GM12878 (cell line): ENCODE measurements at regions of chr18 and their contacts with region 1.

Region 1: DNA sequence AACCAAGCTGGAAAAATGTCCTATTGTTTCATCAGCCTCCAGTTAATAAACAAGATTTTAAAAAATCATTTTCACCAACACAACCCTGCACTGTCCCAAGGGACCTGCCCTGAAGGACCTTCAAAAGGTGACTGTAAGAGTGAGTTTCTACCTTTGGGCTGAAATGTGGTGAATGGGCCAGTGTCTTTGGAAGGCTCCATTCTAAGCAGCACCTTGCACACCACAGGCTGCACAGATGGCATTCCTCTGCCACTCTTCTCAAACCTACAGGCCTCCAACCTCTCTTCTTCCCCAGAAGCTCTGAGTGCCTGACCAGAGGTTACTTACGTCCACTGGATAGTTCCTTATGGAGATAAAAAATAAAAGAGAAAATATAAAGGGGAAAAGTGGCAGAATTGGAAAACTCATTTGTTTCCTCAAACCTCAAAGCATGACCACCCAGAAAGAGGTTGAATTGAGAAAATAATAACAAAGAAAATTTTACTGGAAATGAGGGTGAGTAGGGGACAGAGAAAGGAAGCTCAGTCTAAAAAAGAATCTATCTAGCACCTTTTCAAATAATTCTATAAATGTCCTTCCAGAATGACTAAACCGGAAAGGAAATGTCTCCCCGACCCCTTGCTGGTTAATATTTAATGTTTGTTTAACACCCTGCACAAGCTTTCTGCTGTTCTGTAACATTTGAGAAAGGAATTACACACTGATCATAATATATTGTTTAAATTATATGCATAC is 175.7 kb downstream of the METTL4 start:
- DNase-seq: no peak
- ATAC-seq: peak; percentile 83
- H3K4me3 ChIP-seq: no peak overlapping the region
- H3K27ac ChIP-seq: no peak overlapping the region
- H3K4me1 ChIP-seq: no peaks in the 10 kb centered on the region
- H3K27me3 ChIP-seq: no peaks in the 10 kb centered on the region
- CTCF ChIP-seq: no peak
- EP300 ChIP-seq: peak; percentile 59 to 63; a peak in 2 of 4 replicates
- POLR2A ChIP-seq: no peak
- RAD21 ChIP-seq: no peak

Region 2: GRCh38 chr18:1846640-1847039 is 549.0 kb before region 1 on chr18:
- CTCF ChIA-PET with region 1: no interaction called
- POLR2A ChIA-PET with region 1: no interaction called
- RAD21 ChIA-PET with region 1: no interaction called
- SMC1A ChIA-PET with region 1: no interaction called
- in situ Hi-C with region 1: no loop called
- intact Hi-C with region 1: no loop called
- DNase-seq: no peak
- ATAC-seq: no peak
- H3K4me3 ChIP-seq: no peak overlapping the region
- H3K27ac ChIP-seq: no peak overlapping the region
- H3K4me1 ChIP-seq: no peaks in the 10 kb centered on the region
- H3K27me3 ChIP-seq: no peaks in the 10 kb centered on the region
- CTCF ChIP-seq: no peak
- EP300 ChIP-seq: no peak
- POLR2A ChIP-seq: no peak
- RAD21 ChIP-seq: no peak

Region 3: GRCh38 chr18:2312440-2312839 is 83.2 kb before region 1 on chr18:
- CTCF ChIA-PET with region 1: interaction called, 3 read pairs
- POLR2A ChIA-PET with region 1: interaction called, 10 read pairs
- RAD21 ChIA-PET with region 1: interaction called, 10 read pairs
- SMC1A ChIA-PET with region 1: interaction called, 10 read pairs
- in situ Hi-C with region 1: no loop called
- intact Hi-C with region 1: no loop called
- DNase-seq: peak; percentile 20
- ATAC-seq: peak; percentile 87
- H3K4me3 ChIP-seq: no peak overlapping the region
- H3K27ac ChIP-seq: no peak overlapping the region
- H3K4me1 ChIP-seq: no peaks in the 10 kb centered on the region
- H3K27me3 ChIP-seq: 0 out of 4 replicates have a peak, but pooled peaks cover 0 to 2% of the 10 kb centered on the region in 2 experiments
- CTCF ChIP-seq: no peak
- EP300 ChIP-seq: peak in 1 of 2 experiments; percentile 35; a peak in 1 of 4 replicates
- POLR2A ChIP-seq: no peak
- RAD21 ChIP-seq: no peak

Region 4: DNA sequence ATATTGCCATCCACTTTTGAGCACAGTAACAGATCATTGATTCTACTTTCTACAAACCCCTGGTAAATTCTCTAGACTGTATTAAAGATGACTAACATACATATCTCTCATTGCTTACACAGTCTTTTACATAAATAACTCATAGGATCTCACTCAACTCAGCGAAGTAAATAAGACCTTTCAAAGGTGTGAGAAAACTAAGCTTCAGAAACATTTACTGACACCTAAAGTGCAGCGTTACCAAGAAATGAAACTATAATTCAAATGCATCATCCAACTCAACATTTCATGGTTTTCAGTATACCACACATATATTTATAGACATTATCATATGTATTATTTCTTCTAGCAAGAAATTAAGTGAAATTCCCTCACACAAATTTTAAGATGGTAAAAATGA is 14.1 kb before region 1 on chr18:
- CTCF ChIA-PET with region 1: interaction called, 6 read pairs
- POLR2A ChIA-PET with region 1: interaction called, 6 read pairs
- RAD21 ChIA-PET with region 1: interaction called, 6 read pairs
- SMC1A ChIA-PET with region 1: interaction called, 16 read pairs
- in situ Hi-C with region 1: no loop called
- intact Hi-C with region 1: no loop called
- DNase-seq: no peak
- ATAC-seq: peak; percentile 55
- H3K4me3 ChIP-seq: no peak overlapping the region
- H3K27ac ChIP-seq: no peak overlapping the region
- H3K4me1 ChIP-seq: no peaks in the 10 kb centered on the region
- H3K27me3 ChIP-seq: no peaks in the 10 kb centered on the region; a peak in 1 of 4 replicates
- CTCF ChIP-seq: no peak
- EP300 ChIP-seq: no peak
- POLR2A ChIP-seq: no peak
- RAD21 ChIP-seq: no peak